ENCODE measurements at regions of chr19 and their contacts with region 1.

Region 1: DNA sequence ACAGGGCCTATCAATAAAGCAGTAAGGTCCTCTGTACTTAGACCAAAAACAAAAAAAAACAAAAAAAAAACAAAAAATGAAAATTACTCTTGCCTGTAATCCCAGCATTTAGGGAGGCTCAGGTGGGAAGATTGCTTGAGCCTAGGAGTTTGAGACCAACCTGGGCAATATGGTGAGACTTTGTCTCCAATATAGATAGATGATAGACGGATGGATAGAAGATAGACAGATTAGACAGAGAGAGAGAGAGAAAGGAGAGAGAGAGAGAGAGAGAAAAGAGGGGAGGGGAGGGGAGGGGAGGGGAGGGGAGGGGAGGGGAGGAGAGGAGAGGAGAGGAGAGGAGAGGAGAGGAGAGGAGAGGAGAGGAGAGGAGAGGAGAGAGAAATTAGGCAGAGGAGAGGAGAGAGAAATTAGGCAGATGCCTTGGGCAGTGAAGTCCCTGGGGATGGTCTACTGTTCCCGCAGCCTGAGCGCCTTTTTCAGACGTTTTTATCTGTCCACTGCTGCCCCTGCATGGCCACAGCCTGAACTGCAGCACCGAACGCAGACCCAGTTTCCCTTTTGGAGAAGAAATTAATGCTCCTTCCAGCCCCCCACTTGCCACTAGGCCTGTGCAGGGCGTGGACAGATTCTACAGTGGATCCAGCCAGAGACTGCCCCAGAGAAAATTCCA is 9.8 kb upstream of the ZNF627 start:
- DNase-seq: peak; percentile 95
- H3K4me3 Mint-ChIP-seq: no peak overlapping the region
- H3K27ac Mint-ChIP-seq: peak overlapping the region; percentile 26
- H3K4me1 Mint-ChIP-seq: peaks cover 3% of the 10 kb centered on the region
- H3K27me3 Mint-ChIP-seq: no peaks in the 10 kb centered on the region

Region 2: DNA sequence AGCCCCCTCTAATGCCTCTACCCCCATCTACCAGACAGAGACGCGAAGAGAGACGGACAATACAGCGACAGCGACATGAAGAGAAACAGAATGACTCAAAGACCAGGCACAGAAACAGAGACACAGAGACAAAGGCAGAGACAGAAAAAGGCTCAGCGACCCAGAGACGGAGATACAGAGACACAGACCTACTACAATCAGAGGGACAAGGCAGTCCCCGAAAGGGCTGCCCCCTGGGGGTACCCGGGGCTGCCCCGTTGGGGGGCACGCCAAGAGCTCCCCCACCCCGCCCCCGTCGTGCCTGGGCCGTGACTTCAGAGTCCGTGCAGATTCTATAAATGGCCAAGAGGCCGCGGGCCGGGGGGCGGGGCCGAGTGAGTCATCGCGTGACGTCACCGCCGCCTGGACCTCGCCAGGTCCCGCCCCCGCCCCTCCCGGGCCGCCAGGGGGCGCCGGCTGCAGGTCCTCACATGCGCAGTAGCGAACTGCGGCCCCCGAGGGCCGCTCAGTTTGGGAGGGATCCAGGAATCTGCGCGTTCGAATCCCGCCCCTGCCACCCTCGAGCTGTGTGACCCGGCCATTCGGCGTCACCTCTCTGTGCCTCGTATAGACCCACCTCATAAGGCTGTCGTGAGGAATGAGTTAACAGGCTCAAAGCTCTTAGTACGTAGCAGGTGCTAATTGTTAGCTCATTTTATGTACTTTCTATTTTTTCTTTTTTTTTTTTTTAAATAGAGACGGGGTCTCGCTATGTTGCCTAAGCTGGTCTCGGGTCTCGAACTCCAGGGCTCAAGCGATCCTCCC is 51.4 kb before region 1 on chr19:
- intact Hi-C with region 1: loop called (anchors 2 kb)
- DNase-seq: peak; percentile 96
- H3K4me3 Mint-ChIP-seq: peak overlapping the region; percentile 67
- H3K27ac Mint-ChIP-seq: peak overlapping the region; percentile 45
- H3K4me1 Mint-ChIP-seq: peaks cover 8% of the 10 kb centered on the region
- H3K27me3 Mint-ChIP-seq: peaks cover 29% of the 10 kb centered on the region

Region 3: DNA sequence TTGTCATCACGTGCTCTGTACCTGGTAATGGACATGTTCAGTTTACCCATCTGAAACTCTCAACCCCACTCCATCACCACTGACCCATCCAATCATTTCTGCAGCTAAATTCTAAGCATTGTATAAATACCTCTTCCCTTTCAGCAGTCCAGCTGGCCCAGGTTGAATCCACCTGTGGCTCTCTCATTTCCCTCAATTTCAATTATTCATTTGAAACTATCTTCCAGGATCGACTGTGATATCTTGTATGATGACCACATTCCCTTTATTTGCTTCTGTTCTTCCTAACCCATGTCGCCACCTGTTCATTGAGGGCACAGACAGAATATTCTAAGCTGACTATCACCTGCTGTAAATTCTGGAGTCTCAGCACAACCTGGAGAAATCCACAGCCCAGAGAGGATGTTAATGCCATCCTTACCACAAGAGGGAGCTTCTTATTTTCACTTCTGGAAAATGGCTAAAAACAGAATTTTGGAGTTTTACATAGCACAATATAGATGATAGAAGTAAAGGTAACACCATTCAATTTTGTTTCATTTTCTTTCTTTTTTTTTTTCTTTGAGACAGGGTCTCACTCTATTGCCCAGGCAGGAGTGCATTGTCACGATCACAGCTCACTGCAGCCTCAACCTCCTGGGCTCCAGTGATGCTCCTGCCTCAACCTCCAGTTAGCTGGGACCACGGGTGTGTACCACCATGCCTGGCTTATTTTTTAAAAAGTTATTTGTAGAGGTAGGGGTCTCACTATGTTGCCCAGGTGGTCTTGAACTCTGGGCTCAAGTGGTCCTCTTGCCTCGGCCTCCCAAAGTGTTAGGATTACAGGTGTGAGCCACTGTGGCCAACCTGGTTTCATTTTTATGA is 112.7 kb after region 1 on chr19:
- intact Hi-C with region 1: no loop called
- DNase-seq: peak; percentile 58
- H3K4me3 Mint-ChIP-seq: no peak overlapping the region
- H3K27ac Mint-ChIP-seq: no peak overlapping the region
- H3K4me1 Mint-ChIP-seq: no peaks in the 10 kb centered on the region
- H3K27me3 Mint-ChIP-seq: peaks cover 5% of the 10 kb centered on the region

Measured in activated CD4-positive, alpha-beta T cell treated with anti-CD3 and anti-CD28 coated beads, Interleukin-2, amount 10 ng/mL, durations not matched to agents 24 days and 14 days (primary cell).